ENCODE measurements at regions of chr4 and their contacts with region 1.

Region 1: DNA sequence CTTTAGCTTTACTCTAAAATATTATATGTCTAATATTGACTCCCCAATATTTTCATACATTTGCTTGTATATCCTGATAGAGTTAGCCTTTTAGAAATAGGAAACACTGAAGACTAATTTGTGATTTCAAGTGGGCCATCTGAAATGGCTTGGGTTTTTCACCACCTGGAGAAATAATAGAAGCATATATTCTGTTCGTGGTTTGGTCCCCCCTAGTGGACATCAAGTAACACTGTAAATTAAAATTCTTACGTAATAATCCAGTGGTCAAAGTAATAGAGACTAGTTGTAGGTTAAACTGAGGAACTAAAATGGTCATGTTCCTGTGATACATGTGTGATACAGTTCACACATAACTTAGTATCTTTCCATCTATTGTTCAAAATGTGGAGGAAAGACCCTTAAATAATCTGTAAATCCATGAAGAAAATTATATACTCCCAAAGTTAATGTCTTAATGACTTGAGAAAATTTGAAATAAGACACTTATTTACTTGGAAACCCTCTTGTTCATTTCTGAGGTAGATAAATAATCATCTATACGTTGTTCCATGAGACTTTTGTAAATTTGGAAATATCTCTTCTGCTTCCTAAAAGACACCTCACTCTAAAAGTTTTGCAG is 79.8 kb upstream of the SMARCAD1 start:
- DNase-seq: no peak
- H3K4me3 ChIP-seq: no peak overlapping the region
- H3K27ac ChIP-seq: no peak overlapping the region
- H3K27me3 ChIP-seq: peaks cover 0 to 5% (median 0%) of the 10 kb centered on the region in 45 donors
- CTCF ChIP-seq: peak in 55 of 56 donors; percentile 20 to 68 (median 49)

Region 2: DNA sequence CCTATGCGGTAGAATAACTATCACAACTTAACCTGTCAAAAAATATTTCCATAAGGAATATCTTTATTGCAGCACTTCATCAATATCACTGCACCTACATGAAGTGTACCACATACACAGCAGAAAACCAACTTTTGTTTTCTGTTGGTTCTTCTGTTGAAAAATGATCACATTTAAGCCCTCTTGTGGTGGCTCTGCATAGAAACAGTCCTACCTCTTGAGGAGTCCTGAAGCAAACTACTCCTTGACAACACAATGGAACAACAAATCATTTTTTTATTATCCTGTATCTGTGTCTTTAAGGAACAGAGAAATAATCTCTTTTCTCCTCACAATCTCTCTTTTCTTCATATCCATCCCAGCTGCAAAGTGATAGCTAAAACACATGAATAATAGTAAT is 339.1 kb before region 1 on chr4:
- intact Hi-C with region 1: loop called in 1 of 2 experiments (anchors 10 kb)
- DNase-seq: no peak
- H3K4me3 ChIP-seq: no peak overlapping the region
- H3K27ac ChIP-seq: no peak overlapping the region
- H3K27me3 ChIP-seq: peaks cover 0 to 4% (median 0%) of the 10 kb centered on the region in 45 donors
- CTCF ChIP-seq: peak in 43 of 56 donors; percentile 17 to 57 (median 37)